ENCODE measurements at regions of chr19 and their contacts with region 1.

Region 1: DNA sequence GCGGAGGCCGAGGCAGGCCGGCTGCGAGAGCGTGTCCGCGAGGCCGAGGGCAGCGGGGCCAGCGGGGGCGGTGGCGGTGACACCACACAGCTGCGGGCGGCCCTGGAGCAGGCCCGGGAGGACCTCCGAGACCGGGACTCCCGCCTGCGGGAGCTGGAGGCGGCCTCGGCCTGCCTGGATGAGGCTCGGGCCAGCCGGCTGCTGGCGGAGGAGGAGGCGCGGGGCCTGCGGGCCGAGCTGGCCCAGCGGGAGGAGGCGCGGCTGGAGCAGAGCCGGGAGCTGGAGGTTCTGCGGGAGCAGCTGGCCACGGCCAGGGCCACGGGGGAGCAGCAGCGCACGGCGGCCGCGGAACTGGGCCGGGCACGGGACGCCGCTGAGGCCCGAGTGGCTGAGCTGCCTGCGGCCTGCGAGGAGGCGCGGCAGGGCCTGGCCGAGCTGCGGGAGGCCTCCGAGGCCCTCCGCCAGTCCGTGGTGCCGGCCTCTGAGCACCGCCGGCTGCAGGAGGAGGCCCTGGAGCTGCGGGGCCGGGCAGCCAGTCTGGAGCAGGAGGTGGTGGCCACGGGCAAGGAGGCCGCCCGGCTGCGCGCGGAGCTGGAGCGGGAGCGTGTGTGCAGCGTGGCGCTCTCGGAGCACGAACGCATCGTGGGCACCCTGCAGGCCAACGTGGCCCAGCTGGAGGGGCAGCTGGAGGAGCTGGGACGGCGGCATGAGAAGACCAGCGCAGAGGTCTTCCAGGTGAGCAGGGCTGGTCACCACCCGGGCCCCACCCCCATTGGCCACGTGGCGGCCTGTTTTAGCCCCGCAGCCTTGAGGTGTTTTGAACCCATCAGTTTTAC is 11.7 kb upstream of the EBI3 start:
- DNase-seq: no peak
- H3K4me3 ChIP-seq: no peak overlapping the region
- H3K27me3 ChIP-seq: no peaks in the 10 kb centered on the region
- CTCF ChIP-seq: no peak

Region 2: GRCh38 chr19:4246767-4247593 is 29.3 kb after region 1 on chr19 and contains the start of gene YJU2:
- CTCF ChIA-PET with region 1: interaction called, 5 read pairs
- POLR2A ChIA-PET with region 1: interaction called, 16 read pairs
- DNase-seq: peak; percentile 94
- H3K4me3 ChIP-seq: peak within 1 kb of the TSS; percentile 86
- H3K27me3 ChIP-seq: no peaks in the 10 kb centered on the region
- CTCF ChIP-seq: peak; percentile 61
- polyA plus RNA-seq, gene YJU2: 12.4 and 14.5 TPM in 2 replicates